Calu3 (cell line): ENCODE measurements at regions of chr16 and their contacts with region 1.

Region 1: GRCh38 chr16:26863931-26864330 is 202.8 kb upstream of the C16orf82 start:
- DNase-seq: no peak
- H3K4me3 Mint-ChIP-seq: no peak overlapping the region
- H3K27ac Mint-ChIP-seq: no peak overlapping the region
- H3K4me1 Mint-ChIP-seq: no peaks in the 10 kb centered on the region
- H3K27me3 Mint-ChIP-seq: no peaks in the 10 kb centered on the region
- CTCF ChIP-seq: no peak

Region 2: GRCh38 chr16:25785361-25785760 is 1078.6 kb before region 1 on chr16:
- CTCF ChIA-PET with region 1: interaction called, 14 read pairs
- intact Hi-C with region 1: no loop called
- DNase-seq: no peak
- H3K4me3 Mint-ChIP-seq: no peak overlapping the region
- H3K27ac Mint-ChIP-seq: no peak overlapping the region
- H3K4me1 Mint-ChIP-seq: no peaks in the 10 kb centered on the region
- H3K27me3 Mint-ChIP-seq: no peaks in the 10 kb centered on the region
- CTCF ChIP-seq: no peak